ENCODE measurements at regions of chrX and their contacts with region 1.

Region 1: DNA sequence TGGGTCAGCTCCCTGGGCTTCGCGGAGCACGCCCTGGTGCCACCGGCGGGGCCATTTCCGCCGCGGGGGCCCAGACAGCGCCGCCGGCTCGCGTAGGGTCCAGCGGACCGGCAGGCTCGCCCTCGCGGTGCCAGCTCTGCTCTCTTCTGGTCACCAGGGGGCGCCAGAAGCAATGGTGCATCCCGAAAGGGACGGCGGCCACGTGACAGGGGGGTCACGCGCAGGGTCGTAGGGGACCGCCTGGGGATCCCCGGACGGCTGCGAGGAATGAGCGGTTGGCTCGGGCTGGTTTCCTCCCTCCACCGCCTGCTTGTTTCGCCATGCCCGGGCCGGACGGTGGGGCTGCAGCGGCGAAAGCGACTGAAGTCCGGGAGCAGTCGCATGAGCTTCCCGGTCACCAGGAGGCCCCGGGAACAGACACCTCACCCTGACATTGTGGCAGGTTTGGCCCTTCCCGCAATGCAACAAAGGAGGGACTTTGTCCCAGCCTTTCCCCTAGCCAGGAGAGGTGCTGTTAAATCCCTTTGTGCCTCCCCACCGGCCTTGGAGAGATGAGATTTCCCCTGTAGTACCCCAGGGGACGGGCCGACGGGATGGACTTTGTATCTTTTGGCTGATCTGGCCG is 15.8 kb downstream of the ZCCHC12 start:
- DNase-seq: no peak
- H3K4me3 ChIP-seq: peak overlapping the region; percentile 52
- H3K27ac ChIP-seq: no peak overlapping the region
- H3K27me3 ChIP-seq: no peaks in the 10 kb centered on the region
- CTCF ChIP-seq: peak; percentile 55

Region 2: GRCh38 chrX:118823263-118824172 is 15.9 kb before region 1 on chrX and contains the start of gene ZCCHC12:
- CTCF ChIA-PET with region 1: interaction called, 12 read pairs
- POLR2A ChIA-PET with region 1: no interaction called
- DNase-seq: no peak
- H3K4me3 ChIP-seq: peak within 1 kb of the TSS; percentile 38
- H3K27ac ChIP-seq: no peak within 1 kb of the TSS
- H3K27me3 ChIP-seq: peaks cover 40% of the 10 kb centered on the region
- CTCF ChIP-seq: 0 out of 2 replicates have a peak, but pooled peaks have one; percentile 4
- polyA plus RNA-seq, gene ZCCHC12: 0.11 TPM in 2 replicates

Region 3: DNA sequence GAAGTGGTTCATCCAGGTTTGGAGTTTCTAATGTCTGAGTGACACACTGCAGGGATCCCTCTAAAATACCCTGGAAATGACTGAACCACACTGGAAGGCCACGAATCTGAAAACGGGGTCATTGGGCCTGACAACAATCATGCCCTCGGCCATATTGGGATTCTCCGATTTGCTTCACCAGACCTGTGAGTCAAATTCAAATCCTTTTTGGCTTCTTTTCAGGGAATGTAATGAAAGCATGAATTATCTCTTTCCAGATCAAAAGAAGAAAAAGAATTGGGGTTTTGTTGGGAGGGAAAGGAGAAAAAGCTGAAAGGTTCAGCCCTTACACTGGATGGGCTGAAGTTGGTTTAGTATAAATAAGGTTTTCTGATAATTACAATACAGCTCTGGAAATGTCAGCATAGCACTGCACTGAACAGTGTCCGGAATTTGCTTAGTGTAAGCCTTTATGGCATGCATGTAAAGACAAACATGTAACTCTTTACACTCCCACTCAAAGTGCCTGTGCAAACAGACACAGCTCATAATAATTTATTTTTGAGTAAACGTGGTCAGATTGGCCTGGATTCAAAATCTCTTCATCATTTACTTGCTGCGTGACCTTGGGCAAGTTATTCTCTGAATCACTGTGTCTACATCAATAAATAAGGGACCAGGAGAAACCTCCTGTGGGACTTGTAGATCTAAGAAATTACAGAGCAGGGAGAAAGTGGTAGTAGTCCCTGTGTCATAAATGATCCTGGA is 254.7 kb after region 1 on chrX:
- CTCF ChIA-PET with region 1: interaction called, 10 read pairs
- POLR2A ChIA-PET with region 1: no interaction called
- DNase-seq: no peak
- H3K4me3 ChIP-seq: no peak overlapping the region
- H3K27ac ChIP-seq: no peak overlapping the region
- H3K27me3 ChIP-seq: peaks cover 2% of the 10 kb centered on the region
- CTCF ChIP-seq: no peak

Measured in AG04450 (cell line).